ENCODE measurements at regions of chr14 and their contacts with region 1.

Region 1: DNA sequence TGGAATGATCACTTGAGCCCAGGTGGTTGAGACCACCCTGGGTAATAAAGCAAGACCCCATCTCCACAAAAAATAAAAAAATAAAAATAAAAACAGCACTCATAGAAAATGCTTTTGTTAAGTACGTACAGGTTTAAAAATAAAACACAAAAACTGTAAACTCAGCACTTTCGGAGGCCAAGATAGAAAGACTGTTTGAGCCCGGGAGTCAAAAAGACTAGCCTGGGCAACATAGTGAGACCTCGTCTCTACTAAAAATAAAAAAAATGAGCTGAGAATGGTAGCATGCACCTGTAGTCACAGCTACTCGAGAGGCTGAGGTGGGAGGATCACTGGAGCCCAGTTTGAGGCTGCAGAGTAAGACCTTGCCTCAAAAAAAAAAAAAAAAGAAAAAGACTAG is 7.5 kb downstream of the ATP6V1D start:
- DNase-seq: no peak
- H3K4me3 ChIP-seq: no peak overlapping the region
- H3K27ac ChIP-seq: no peak overlapping the region
- H3K4me1 ChIP-seq: peaks cover 6% of the 10 kb centered on the region; the same call in 1 of the 2 replicates
- H3K27me3 ChIP-seq: no peaks in the 10 kb centered on the region
- CTCF ChIP-seq: no peak

Region 2: DNA sequence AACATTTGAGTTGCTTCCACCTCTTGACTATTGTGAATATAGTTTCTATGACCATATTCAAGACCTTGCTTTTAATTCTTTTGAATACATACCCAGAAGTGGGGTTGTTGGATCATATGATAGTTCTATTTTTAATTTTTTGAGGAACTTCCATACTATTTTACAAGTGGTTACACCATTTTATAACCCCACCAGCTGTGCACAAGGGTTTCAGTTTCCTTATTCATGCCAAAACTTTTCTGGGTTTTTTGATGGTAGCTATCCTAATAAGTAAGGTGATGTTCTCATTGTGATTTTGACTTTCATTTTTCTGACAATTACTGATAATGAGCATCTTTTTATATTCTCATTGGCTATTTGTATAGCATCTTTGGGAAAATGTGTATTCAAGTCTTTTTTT is 272.2 kb before region 1 on chr14:
- CTCF ChIA-PET with region 1: no interaction called
- POLR2A ChIA-PET with region 1: no interaction called
- intact Hi-C with region 1: no loop called
- DNase-seq: no peak
- H3K4me3 ChIP-seq: no peak overlapping the region
- H3K27ac ChIP-seq: no peak overlapping the region
- H3K4me1 ChIP-seq: no peaks in the 10 kb centered on the region
- H3K27me3 ChIP-seq: no peaks in the 10 kb centered on the region
- CTCF ChIP-seq: no peak

Region 3: DNA sequence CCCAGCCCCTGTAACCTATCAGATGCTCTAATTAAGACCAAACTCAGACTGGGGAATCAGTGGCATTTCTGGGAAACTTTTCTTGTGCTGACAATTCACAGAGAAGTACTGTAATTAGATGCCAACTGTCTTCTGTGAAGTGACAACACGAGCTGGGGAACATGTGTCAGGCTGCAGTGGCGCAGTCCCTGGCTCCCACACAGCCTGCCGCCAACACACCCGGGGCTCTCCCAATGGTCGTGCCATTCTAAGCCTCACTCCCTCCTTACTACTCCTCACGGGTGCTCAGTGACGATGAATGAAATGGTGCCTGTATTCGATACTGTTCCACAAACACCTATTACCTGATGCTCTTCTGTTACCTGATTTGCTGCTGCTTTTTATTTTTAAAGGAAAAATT is 144.2 kb before region 1 on chr14:
- CTCF ChIA-PET with region 1: no interaction called
- POLR2A ChIA-PET with region 1: interaction called, 13 read pairs
- intact Hi-C with region 1: no loop called
- DNase-seq: no peak
- H3K4me3 ChIP-seq: no peak overlapping the region
- H3K27ac ChIP-seq: no peak overlapping the region
- H3K4me1 ChIP-seq: no peaks in the 10 kb centered on the region
- H3K27me3 ChIP-seq: no peaks in the 10 kb centered on the region
- CTCF ChIP-seq: no peak

Region 4: DNA sequence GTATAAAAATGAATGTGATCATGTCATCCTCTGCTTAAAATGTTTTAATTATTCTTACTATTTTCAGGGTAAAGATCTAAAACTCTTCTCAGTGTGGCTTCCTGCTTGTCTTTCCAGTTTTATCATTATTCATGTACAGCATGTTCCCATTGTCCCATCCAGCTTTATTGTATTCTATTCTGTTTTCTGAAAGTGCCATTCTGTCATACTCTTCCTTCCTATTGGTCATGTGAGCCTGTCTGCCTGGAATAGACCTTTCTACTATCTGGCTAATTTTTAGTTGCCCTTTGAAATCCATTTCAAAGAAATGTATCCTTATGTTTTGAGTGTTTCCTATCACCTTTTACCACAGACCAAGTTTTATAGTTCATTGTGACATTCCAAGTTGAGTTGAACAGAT is 75.9 kb before region 1 on chr14:
- CTCF ChIA-PET with region 1: no interaction called
- POLR2A ChIA-PET with region 1: no interaction called
- intact Hi-C with region 1: no loop called
- DNase-seq: no peak
- H3K4me3 ChIP-seq: no peak overlapping the region
- H3K27ac ChIP-seq: no peak overlapping the region
- H3K4me1 ChIP-seq: no peaks in the 10 kb centered on the region
- H3K27me3 ChIP-seq: no peaks in the 10 kb centered on the region
- CTCF ChIP-seq: no peak

Region 5: DNA sequence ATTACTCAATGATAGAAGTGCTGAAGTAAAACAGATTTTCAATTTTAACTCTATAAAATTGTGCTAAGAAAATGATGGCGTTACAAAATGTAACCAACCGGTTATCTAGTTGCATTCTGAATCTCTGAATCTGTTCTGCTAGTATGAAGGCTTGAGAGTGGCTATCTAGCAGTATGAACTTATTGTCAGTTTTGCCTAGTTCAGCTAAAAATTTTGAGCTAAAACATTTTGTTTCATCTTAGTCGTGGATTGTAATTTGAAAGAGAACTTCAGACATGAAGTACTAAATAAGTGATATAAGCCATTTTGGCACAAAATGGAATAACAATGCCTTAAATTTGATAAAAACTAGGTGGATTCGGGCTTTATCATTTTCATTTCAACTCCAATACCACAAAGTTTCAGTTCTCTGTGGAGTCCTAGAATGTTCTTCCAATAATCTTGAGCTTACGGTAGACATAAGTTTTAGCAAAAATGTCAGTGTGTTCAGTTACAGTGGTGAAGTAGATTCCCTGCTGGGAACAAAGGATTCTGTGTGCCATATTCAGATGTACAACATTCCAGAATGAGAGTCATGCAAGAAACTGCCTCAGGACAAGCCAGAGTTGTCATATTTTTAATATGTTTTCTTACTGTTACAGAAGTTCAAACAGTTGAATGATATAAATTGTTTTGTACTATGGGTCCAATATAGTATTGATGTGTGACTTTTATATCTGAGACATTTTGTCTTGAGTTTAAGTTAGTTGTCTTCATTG is 20.5 kb before region 1 on chr14:
- CTCF ChIA-PET with region 1: no interaction called
- POLR2A ChIA-PET with region 1: no interaction called
- intact Hi-C with region 1: no loop called
- DNase-seq: no peak
- H3K4me3 ChIP-seq: no peak overlapping the region
- H3K27ac ChIP-seq: no peak overlapping the region
- H3K4me1 ChIP-seq: no peaks in the 10 kb centered on the region
- H3K27me3 ChIP-seq: no peaks in the 10 kb centered on the region
- CTCF ChIP-seq: no peak

Region 6: DNA sequence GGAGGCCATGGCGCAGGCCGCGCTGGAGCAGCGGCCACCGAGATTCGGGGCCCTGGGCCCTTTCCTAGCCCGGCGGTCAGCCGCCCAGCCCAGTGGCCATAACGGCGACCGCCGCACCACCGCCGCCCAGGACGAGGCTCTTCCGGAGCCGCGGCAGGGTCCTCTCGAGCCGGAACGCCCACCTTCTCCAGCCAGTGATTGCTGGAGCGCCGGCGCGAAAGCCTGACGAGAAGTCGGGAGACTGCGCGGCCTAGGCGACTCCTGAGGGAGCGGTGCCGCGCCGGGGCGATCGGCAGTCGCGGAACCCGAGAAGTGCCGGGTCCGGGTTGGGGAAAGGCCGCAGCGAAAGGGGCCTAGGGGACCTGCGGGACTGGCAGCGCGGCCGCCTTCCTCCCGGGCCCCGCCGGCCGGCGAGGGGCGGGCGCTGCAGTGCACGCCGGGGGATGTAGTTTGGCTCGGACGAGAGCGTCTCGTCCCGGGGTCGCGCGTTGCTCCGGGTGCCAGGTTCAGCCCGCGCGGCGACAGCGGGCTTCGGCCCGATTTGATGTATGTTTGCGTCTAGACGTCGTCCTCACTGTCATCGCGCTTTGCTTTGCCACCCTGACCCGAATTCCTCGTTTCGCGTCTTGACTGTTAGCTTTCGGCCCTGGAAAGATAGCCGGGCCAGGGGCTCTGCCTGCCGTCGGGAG is 322.6 kb after region 1 on chr14 and contains the start of gene VTI1B:
- CTCF ChIA-PET with region 1: no interaction called
- POLR2A ChIA-PET with region 1: no interaction called
- intact Hi-C with region 1: no loop called
- DNase-seq: peak; percentile 66 to 83
- H3K4me3 ChIP-seq: peak within 1 kb of the TSS; percentile 87
- H3K27ac ChIP-seq: peak within 1 kb of the TSS; percentile 79
- H3K4me1 ChIP-seq: peaks cover 20% of the 10 kb centered on the region
- H3K27me3 ChIP-seq: no peaks in the 10 kb centered on the region
- CTCF ChIP-seq: no peak; the same call in 1 of the 2 replicates
- total RNA-seq, gene VTI1B: 131 and 148 TPM in 2 replicates

Measured in PC-9 (cell line).